ENCODE measurements at regions of chr9 and their contacts with region 1.

Region 1: DNA sequence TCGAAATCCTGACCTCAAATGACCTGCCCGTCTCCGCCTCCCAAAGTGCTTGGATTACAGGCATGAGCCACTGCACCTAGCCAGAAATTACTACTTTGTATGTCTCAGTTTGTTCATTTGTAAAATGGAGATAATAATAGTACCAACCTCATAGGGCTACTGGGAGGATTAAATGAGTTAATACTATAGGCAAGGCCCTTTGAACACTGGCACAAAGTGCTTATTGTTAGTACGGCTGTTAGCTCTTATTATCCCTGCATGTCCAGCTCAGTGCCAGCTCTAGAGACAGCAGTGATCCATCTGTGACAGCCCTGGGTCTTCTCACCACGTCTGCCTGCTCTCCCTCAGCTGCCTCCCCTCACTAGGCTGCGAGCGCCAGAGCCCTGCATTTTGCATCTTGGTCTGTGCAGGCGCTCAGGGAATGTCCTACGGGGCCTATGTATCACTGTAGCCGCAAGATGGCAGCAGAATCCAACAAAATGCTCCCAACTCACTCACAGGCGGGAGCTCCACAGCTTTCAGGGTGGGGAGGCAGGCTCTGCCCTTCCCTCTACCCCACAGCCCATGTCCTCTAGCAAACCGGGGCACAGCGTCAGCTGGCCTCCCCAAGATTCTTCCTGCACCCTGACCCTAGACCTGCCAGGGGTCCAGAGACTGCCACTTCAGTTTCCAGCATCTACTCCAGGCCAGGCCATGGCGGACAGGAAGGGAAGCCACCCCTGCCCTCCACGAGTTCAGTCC is 17.7 kb upstream of the AKNA start:
- DNase-seq: peak; percentile 62
- ATAC-seq: peak; percentile 99
- H3K4me3 Mint-ChIP-seq: no peak overlapping the region
- H3K27ac Mint-ChIP-seq: no peak overlapping the region
- H3K4me1 Mint-ChIP-seq: peaks cover 6% of the 10 kb centered on the region
- H3K27me3 Mint-ChIP-seq: no peaks in the 10 kb centered on the region
- CTCF ChIP-seq: peak; percentile 29

Region 2: DNA sequence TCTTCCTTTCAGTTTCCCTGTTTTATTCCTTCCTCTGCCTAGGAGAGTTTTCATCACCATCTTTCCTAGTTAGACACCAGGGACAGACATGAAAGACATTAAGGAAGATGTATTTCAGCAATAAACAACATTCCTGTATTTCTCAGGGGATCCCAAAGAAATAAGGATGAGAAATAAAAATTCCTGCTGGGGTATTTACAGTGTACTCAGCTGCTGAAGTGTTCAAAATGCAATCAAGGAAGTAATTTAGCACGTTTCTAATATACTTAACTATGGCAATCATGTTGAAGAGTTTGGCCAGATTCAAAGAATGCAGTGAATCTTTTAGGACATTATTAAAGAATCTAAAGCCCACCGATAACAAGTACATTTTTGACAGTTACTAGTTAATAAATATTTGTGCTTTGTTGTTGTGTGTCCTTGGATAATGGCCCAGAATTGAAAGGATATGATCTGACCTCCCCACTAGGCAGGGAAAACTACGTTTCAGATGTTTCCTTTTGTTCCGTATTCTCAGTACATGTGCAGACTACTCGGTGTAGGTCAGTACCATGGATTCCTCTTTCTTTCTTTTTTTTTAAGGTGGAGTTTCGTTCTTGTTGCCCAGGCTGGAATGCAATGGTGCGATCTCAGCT is 1734.4 kb before region 1 on chr9:
- CTCF ChIA-PET with region 1: no interaction called
- POLR2A ChIA-PET with region 1: no interaction called
- intact Hi-C with region 1: no loop called
- DNase-seq: no peak
- ATAC-seq: no peak
- H3K4me3 Mint-ChIP-seq: no peak overlapping the region
- H3K27ac Mint-ChIP-seq: no peak overlapping the region
- H3K4me1 Mint-ChIP-seq: no peaks in the 10 kb centered on the region
- H3K27me3 Mint-ChIP-seq: no peaks in the 10 kb centered on the region
- CTCF ChIP-seq: no peak

Region 3: GRCh38 chr9:114291064-114291474 is 114.4 kb before region 1 on chr9:
- CTCF ChIA-PET with region 1: no interaction called
- POLR2A ChIA-PET with region 1: no interaction called
- intact Hi-C with region 1: no loop called
- DNase-seq: peak; percentile 67
- ATAC-seq: peak; percentile 56
- H3K4me3 Mint-ChIP-seq: no peak overlapping the region
- H3K27ac Mint-ChIP-seq: peak overlapping the region; percentile 43
- H3K4me1 Mint-ChIP-seq: peaks cover 2% of the 10 kb centered on the region
- H3K27me3 Mint-ChIP-seq: peaks cover 3% of the 10 kb centered on the region
- CTCF ChIP-seq: peak; percentile 47

Region 4: GRCh38 chr9:114385412-114386181 is 19.9 kb before region 1 on chr9:
- CTCF ChIA-PET with region 1: interaction called, 10 read pairs
- POLR2A ChIA-PET with region 1: interaction called, 311 read pairs
- intact Hi-C with region 1: no loop called
- DNase-seq: peak; percentile 71
- ATAC-seq: peak; percentile 77
- H3K4me3 Mint-ChIP-seq: peak overlapping the region; percentile 97
- H3K27ac Mint-ChIP-seq: peak overlapping the region; percentile 93
- H3K4me1 Mint-ChIP-seq: peaks cover 85% of the 10 kb centered on the region
- H3K27me3 Mint-ChIP-seq: no peaks in the 10 kb centered on the region
- CTCF ChIP-seq: no peak

Region 5: DNA sequence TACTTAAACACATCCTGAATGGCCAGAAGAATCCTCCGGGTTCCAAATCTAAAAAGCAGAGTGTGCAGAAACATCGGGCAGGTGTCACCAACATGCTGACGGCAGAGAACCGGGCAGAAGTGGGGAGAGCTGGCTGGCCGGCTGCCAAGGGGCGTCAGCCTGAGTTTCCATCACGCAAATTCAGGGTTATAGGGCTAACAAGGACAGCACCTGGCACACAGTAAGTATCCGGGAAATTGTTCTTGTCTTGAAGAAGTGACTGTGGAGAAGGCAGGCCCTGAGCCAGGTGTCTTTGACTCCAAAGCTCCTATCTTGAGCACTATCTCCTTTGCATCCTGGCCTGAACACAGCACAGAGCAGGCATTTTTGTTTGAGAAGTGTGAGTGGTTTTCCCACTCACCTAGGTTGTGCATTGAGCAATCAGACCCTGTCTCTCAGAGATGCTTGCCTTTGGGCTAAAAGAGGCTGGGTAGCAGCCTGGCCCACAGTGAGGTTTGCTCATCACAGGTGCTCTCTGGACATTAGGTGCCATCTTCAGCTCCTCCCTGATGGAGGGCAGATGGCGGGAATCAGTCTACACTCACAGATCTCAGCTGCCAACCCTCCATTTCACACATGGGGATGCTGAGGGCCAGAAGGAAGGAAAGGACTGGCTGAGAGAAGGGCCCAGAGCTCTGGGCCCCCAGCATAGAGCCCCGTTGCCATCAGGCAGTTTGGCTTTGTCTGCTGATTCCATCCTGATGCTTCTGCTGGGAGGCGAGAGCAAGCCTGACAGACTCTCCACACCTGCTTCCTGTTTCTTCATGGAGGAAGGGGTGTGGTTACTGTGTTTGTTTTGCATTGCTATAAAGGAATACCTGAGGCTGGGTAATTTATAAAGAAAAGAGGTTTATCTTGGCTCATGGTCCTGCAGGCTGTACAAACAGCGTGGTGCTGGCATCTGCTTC is 47.0 kb after region 1 on chr9:
- CTCF ChIA-PET with region 1: no interaction called
- POLR2A ChIA-PET with region 1: no interaction called
- intact Hi-C with region 1: loop called (anchors 2 kb)
- DNase-seq: peak; percentile 61
- ATAC-seq: peak; percentile 35
- H3K4me3 Mint-ChIP-seq: peak overlapping the region; percentile 55
- H3K27ac Mint-ChIP-seq: peak overlapping the region; percentile 95
- H3K4me1 Mint-ChIP-seq: peaks cover 61% of the 10 kb centered on the region
- H3K27me3 Mint-ChIP-seq: no peaks in the 10 kb centered on the region
- CTCF ChIP-seq: no peak

Region 6: GRCh38 chr9:114505187-114506081 is 100.0 kb after region 1 on chr9 and contains the start of gene WHRN:
- CTCF ChIA-PET with region 1: interaction called, 32 read pairs
- POLR2A ChIA-PET with region 1: no interaction called
- intact Hi-C with region 1: loop called (anchors 1 kb)
- DNase-seq: peak; percentile 84
- ATAC-seq: peak; percentile 85
- H3K4me3 Mint-ChIP-seq: peak within 1 kb of the TSS; percentile 86
- H3K27ac Mint-ChIP-seq: peak within 1 kb of the TSS; percentile 79
- H3K4me1 Mint-ChIP-seq: peaks cover 51% of the 10 kb centered on the region
- H3K27me3 Mint-ChIP-seq: peaks cover 8% of the 10 kb centered on the region
- CTCF ChIP-seq: no peak
- total RNA-seq, gene WHRN: 12.4 and 14.5 TPM in 2 replicates

Region 7: DNA sequence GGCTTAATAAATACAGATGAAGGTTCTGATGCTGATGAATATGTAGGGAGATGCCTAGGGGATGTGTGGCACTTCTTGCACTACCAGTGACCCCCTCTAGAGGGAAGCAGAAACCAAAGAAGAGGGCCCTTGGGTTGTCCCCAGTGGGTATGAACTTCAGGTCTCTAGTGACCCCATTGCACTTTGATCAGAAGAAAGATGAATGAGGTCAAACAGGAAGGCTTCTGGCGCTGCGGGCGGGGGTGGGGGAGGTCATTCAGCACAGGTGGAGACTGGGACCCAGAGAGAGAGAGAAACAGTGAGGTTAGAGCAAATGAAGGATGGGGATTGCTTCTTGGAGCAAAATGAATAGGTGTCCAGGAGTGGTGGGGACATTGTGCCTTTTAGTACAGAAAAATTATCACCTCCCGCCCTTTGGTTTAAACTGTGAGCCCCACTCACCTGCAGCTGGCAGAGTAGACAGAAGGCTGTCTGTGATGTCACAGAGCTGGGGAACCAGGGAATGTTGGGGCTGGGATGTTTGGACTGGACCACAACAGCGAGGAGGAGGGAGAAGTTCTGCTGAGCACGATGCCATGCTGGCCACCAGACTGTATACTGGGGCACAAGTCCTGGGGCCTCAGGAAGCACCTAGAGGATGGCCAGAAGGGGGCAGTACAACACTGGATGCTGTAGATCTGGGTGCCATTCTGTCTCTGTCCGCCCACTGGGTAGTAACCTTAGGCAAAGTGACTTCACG is 276.3 kb after region 1 on chr9 and contains the start of gene TEX48:
- CTCF ChIA-PET with region 1: interaction called, 12 read pairs
- POLR2A ChIA-PET with region 1: interaction called, 3 read pairs
- intact Hi-C with region 1: loop called (anchors 1 kb)
- DNase-seq: no peak
- ATAC-seq: peak; percentile 94
- H3K4me3 Mint-ChIP-seq: no peak within 1 kb of the TSS
- H3K27ac Mint-ChIP-seq: peak within 1 kb of the TSS; percentile 36
- H3K4me1 Mint-ChIP-seq: peaks cover 5% of the 10 kb centered on the region
- H3K27me3 Mint-ChIP-seq: peaks cover 24% of the 10 kb centered on the region
- CTCF ChIP-seq: no peak
- total RNA-seq, gene TEX48: not detected in 2 replicates

Region 8: DNA sequence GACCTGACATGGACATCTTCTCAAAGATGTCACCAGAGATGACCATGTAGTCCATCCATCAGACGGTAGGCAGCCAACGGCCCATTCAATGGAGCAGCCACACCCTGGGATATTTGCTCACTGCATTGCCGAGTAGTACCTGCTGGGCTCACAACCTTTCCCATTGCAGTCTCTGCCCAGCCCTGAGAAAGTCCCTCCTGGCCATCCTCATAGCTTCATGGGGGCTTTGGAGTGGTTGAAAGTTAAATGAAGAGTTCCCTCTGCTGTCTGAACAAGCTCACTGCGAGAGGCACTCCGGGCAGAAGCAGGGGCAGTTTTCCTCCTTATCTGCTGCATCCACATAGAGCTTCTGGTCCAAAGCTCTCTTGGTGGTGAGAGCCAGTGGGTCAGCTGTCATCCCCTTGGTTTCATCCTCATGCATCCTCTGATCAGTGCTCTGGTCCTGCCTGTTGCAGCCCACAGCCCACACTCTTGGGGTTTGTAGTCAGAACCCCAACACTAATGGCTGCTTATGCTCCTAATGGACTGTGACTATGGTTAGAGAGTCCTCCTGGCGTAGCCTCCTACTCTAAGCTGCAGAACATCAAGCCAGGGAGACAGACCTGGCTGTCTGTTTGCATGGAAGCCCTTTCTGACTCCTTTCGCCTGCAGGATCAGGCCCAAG is 501.6 kb after region 1 on chr9:
- CTCF ChIA-PET with region 1: interaction called, 8 read pairs
- POLR2A ChIA-PET with region 1: no interaction called
- intact Hi-C with region 1: loop called (anchors 5 kb)
- DNase-seq: no peak
- ATAC-seq: no peak
- H3K4me3 Mint-ChIP-seq: no peak overlapping the region
- H3K27ac Mint-ChIP-seq: no peak overlapping the region
- H3K4me1 Mint-ChIP-seq: peaks cover 59% of the 10 kb centered on the region
- H3K27me3 Mint-ChIP-seq: no peaks in the 10 kb centered on the region
- CTCF ChIP-seq: no peak

Region 9: GRCh38 chr9:115466756-115467155 is 1061.3 kb after region 1 on chr9:
- CTCF ChIA-PET with region 1: no interaction called
- POLR2A ChIA-PET with region 1: no interaction called
- intact Hi-C with region 1: no loop called
- DNase-seq: no peak
- ATAC-seq: no peak
- H3K4me3 Mint-ChIP-seq: no peak overlapping the region
- H3K27ac Mint-ChIP-seq: no peak overlapping the region
- H3K4me1 Mint-ChIP-seq: no peaks in the 10 kb centered on the region
- H3K27me3 Mint-ChIP-seq: no peaks in the 10 kb centered on the region
- CTCF ChIP-seq: no peak